ENCODE measurements at regions of chr4 and their contacts with region 1.

Region 1: GRCh38 chr4:36244257-36245079 is at the start of gene ARAP2:
- DNase-seq: peak; percentile 68
- H3K4me3 Mint-ChIP-seq: peak within 1 kb of the TSS; percentile 94
- H3K27ac Mint-ChIP-seq: peak within 1 kb of the TSS; percentile 97
- H3K4me1 Mint-ChIP-seq: peaks cover 41% of the 10 kb centered on the region
- H3K27me3 Mint-ChIP-seq: peaks cover 9% of the 10 kb centered on the region
- total RNA-seq, gene ARAP2: 40.1 and 54.9 TPM in 2 replicates

Region 2: GRCh38 chr4:35506161-35506560 is 738.3 kb before region 1 on chr4:
- intact Hi-C with region 1: no loop called
- DNase-seq: no peak
- H3K4me3 Mint-ChIP-seq: no peak overlapping the region
- H3K27ac Mint-ChIP-seq: no peak overlapping the region
- H3K4me1 Mint-ChIP-seq: no peaks in the 10 kb centered on the region
- H3K27me3 Mint-ChIP-seq: no peaks in the 10 kb centered on the region

Region 3: DNA sequence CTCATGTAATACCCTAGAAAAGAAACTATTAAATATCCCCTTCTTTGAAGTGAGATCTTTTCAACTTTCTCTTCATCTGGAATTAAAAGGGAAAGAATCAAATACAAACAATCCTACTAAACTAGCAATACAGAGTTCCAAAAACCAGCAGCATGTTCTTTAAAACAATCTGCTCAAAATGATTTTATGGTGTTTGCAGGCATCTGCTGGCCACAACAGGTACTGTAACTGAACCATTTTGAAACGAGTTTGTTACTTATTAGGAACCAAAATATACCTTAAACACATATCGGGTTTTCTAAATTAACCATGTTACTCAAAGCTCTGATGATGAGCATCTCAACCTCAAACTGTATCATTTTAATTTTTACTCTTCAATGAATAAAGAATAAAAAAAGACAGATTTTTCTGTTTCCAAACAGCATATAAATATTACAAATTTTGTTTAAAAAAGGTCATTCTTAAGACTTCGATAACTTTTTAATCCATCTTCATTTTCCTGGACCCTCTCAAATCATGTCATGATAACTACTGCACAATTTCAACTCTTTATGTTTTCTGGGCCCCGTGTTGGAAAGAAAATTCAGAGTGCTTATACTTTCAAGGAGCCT is 56.6 kb before region 1 on chr4:
- intact Hi-C with region 1: loop called (anchors 2 kb)
- DNase-seq: no peak
- H3K4me3 Mint-ChIP-seq: no peak overlapping the region
- H3K27ac Mint-ChIP-seq: no peak overlapping the region
- H3K4me1 Mint-ChIP-seq: peaks cover 39% of the 10 kb centered on the region
- H3K27me3 Mint-ChIP-seq: no peaks in the 10 kb centered on the region

Region 4: DNA sequence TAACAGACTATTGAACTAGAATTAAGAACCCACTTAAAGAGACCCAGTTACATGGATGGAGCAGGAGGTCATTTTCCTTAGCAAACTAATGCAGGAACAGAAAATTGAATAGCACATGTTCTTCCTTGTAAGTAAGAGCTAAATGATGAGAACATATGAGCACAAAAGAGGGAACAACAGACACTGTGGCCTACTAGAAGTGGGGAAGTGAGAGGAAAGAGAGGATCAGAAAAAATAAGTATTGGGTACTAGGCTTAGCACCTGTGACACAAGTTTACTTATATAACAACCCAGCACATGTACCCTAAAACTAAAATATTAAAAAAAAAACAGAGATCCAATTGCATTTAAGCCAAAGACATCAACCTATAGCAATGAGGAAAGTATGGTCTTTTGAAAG is 26.3 kb before region 1 on chr4:
- intact Hi-C with region 1: loop called (anchors 2 kb)
- DNase-seq: no peak
- H3K4me3 Mint-ChIP-seq: no peak overlapping the region
- H3K27ac Mint-ChIP-seq: peak overlapping the region; percentile 47
- H3K4me1 Mint-ChIP-seq: peaks cover 51% of the 10 kb centered on the region
- H3K27me3 Mint-ChIP-seq: no peaks in the 10 kb centered on the region

Region 5: GRCh38 chr4:36255577-36255976 is 11.1 kb after region 1 on chr4:
- intact Hi-C with region 1: loop called (anchors 1 kb)
- DNase-seq: peak; percentile 72
- H3K4me3 Mint-ChIP-seq: peak overlapping the region; percentile 81
- H3K27ac Mint-ChIP-seq: peak overlapping the region; percentile 97
- H3K4me1 Mint-ChIP-seq: peaks cover 47% of the 10 kb centered on the region
- H3K27me3 Mint-ChIP-seq: no peaks in the 10 kb centered on the region

Region 6: DNA sequence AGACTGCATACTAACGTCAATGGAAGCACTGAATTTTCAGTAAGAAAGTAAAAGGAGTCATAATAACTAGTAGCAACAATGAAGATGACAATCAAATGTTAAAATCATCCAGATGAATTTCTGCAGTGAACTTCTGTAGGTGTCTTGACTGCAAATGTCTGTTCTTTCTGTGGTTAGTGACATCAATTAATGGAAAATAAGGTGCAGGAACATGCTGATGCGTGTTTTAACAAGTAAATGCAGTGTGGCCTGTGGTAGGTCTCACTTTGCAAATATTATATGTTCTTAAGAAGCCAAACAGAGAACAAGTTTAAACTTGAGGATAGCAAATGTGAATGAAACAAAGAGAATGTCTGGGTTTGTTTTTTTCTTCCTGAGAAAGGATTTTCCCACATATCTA is 34.3 kb after region 1 on chr4:
- intact Hi-C with region 1: loop called (anchors 1 kb)
- DNase-seq: no peak
- H3K4me3 Mint-ChIP-seq: peak overlapping the region; percentile 72
- H3K27ac Mint-ChIP-seq: peak overlapping the region; percentile 82
- H3K4me1 Mint-ChIP-seq: peaks cover 75% of the 10 kb centered on the region
- H3K27me3 Mint-ChIP-seq: no peaks in the 10 kb centered on the region

Region 7: GRCh38 chr4:36310793-36311192 is 66.3 kb after region 1 on chr4:
- intact Hi-C with region 1: no loop called
- DNase-seq: no peak
- H3K4me3 Mint-ChIP-seq: peak overlapping the region; percentile 3
- H3K27ac Mint-ChIP-seq: peak overlapping the region; percentile 1
- H3K4me1 Mint-ChIP-seq: peaks cover 54% of the 10 kb centered on the region
- H3K27me3 Mint-ChIP-seq: no peaks in the 10 kb centered on the region

Region 8: DNA sequence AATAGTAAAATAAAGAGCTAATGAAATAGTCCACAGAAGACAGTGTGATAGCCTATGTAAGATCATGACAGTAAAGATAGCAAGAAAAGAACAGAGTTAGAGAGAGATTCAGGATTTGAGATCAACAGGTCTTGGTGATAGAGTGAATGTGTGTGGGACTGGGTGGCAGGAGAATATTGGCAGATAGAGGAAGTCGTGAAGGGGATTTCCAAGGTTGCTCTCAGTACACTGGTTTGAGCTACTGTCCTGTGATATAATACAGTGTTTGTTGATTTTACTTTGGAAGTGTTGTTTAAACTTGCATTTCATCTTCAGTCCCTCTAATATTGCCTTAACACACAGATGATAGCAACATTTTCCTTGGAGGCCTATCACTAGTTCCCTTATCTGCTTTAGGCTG is 81.0 kb after region 1 on chr4:
- intact Hi-C with region 1: loop called (anchors 1 kb)
- DNase-seq: no peak
- H3K4me3 Mint-ChIP-seq: peak overlapping the region; percentile 23
- H3K27ac Mint-ChIP-seq: peak overlapping the region; percentile 73
- H3K4me1 Mint-ChIP-seq: peaks cover 71% of the 10 kb centered on the region
- H3K27me3 Mint-ChIP-seq: no peaks in the 10 kb centered on the region

Region 9: DNA sequence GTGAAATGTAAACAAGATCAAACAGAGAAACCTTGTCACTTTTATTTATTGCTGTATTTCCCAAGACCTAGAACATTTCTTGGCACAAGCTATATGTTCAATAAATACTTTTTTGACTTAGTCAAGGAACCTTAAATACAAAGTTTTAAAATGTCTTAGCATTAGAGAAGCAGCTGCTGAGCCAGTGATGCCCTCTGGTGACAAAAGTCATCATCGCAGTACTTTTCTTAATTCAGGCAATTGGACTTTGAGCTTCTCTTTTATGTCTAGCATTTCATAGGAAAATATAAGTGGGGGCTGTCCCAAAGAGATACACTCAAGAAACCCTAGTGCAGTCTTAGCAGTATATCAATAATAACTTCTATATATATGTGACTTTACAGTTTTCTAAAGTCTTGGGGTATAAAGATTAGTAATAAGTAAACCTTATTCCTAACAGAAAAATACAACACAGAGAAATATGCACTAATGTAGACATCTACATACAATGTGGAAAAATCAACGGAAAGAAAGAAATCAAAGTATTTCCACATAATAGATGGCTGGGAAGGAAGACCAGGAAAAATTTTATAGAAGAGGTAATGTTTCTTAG is 155.4 kb after region 1 on chr4:
- intact Hi-C with region 1: loop called (anchors 1 kb)
- DNase-seq: peak; percentile 15
- H3K4me3 Mint-ChIP-seq: no peak overlapping the region
- H3K27ac Mint-ChIP-seq: no peak overlapping the region
- H3K4me1 Mint-ChIP-seq: peaks cover 23% of the 10 kb centered on the region
- H3K27me3 Mint-ChIP-seq: peaks cover 9% of the 10 kb centered on the region

Measured in activated T-helper 1 cell treated with anti-CD3 and anti-CD28 coated beads, Interleukin-12 subunit alpha, Interleukin-12 subunit beta, Interleukin-2, Interleukin-4 antibody, amounts not matched to agents 30 ng/mL and 10 ng/mL and 1 ng/mL, durations not matched to agents 14 hours and 24 hours and 36 hours (primary cell).